Right ventricle myocardium superior (tissue), 1 donor: ENCODE measurements at regions of chr2 and their contacts with region 1.

Region 1: GRCh38 chr2:216698895-216699294 is 3.5 kb upstream of the IGFBP5 start:
- DNase-seq: no peak
- ATAC-seq: peak; percentile 42

Region 2: DNA sequence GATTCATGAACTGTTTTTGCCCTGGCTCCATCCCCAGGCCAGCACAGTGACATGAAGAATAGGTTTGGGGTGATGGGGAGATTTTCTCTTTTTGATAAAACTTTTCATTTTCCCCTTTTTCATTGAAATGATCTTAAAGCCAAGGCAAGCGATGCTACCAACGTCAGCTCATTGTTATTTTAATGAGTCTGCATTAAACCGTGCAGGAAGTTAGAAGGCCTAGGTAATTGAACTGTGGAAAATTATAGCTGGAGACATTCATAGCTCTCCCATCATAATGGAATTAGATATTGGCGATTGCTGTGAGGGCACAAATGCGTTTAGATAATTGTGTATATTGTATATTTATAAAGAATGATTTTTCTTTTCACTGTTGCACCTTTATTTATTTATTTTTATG is 253.4 kb before region 1 on chr2:
- intact Hi-C with region 1: no loop called
- DNase-seq: no peak
- ATAC-seq: no peak

Region 3: GRCh38 chr2:216774620-216775019 is 75.7 kb after region 1 on chr2:
- intact Hi-C with region 1: loop called (anchors 5 kb)
- DNase-seq: peak; percentile 86
- ATAC-seq: peak; percentile 95

Region 4: GRCh38 chr2:216849987-216850386 is 151.1 kb after region 1 on chr2:
- intact Hi-C with region 1: loop called (anchors 10 kb)
- DNase-seq: peak; percentile 79
- ATAC-seq: peak; percentile 92

Region 5: DNA sequence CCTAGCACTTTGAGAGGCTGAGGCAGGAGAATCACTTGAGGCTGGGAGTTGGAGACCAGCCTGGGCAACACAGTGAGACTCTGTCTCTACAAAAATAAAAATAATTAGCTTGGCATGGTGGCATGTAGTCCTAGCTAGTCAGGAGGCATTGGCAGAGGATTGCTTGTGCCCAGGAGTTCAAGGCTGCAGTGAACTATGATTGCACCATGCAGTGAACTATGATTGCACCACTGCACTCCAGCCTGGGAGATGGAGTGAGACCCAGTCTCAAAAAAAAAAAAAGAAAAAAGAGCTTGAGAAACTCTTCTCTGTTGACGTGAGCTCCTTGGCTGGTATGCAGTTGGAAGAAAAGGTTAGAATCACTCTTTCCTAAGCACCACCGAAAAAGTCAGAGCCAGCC is 286.0 kb after region 1 on chr2:
- intact Hi-C with region 1: loop called (anchors 5 kb)
- DNase-seq: no peak
- ATAC-seq: no peak

Region 6: GRCh38 chr2:217166241-217166850 is 467.5 kb after region 1 on chr2:
- intact Hi-C with region 1: loop called (anchors 5 kb)
- DNase-seq: no peak
- ATAC-seq: peak; percentile 83

Region 7: DNA sequence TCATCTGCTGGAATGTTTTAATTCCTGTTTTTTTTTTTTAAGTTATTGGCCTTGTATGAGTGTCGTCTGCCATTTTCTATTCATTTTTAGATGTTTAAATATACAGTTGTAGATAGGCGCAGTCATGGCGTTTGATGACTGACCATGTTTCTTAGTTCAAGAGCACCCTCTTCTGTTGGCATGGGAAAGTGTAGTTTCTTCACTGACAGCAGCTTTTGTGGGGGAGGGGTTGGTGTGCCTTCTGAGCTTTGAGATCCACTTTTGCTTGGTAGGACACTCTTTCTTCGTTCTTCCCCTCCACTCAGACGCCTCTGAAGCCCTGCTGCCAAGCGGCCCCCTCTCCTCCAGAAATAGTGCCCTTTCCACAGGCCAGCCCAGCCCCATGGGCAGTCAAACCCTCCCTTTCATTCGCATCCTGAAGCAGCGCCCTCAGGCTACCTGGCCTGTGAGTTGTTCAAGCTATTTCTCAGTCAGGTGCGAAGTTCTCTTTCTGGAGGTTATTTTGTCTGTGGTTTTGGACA is 811.9 kb after region 1 on chr2:
- intact Hi-C with region 1: loop called (anchors 5 kb)
- DNase-seq: peak; percentile 36
- ATAC-seq: peak; percentile 95